HepG2 (cell line): ENCODE measurements at regions of chr9 and their contacts with region 1.

Region 1: GRCh38 chr9:93134015-93134739 is at the start of gene NINJ1:
- DNase-seq: peak; percentile 40
- ATAC-seq: peak; percentile 81
- H3K4me3 ChIP-seq: peak within 1 kb of the TSS; percentile 85 to 96 (median 92)
- H3K27ac ChIP-seq: peak within 1 kb of the TSS; percentile 99
- H3K4me1 ChIP-seq: peaks cover 77% of the 10 kb centered on the region
- H3K27me3 ChIP-seq: peaks cover 1 to 6% of the 10 kb centered on the region in 2 experiments; a peak in 1 of 5 replicates
- CTCF ChIP-seq: peak; percentile 5; the same call in 1 of the 2 replicates
- EP300 ChIP-seq: no peak
- POLR2A ChIP-seq: peak in 1 of 2 experiments; percentile 95; a peak in 2 of 4 replicates
- RAD21 ChIP-seq: peak; percentile 42; the same call in 1 of the 2 replicates
- total RNA-seq, gene NINJ1: 77.1 and 92.1 TPM in 2 replicates

Region 2: DNA sequence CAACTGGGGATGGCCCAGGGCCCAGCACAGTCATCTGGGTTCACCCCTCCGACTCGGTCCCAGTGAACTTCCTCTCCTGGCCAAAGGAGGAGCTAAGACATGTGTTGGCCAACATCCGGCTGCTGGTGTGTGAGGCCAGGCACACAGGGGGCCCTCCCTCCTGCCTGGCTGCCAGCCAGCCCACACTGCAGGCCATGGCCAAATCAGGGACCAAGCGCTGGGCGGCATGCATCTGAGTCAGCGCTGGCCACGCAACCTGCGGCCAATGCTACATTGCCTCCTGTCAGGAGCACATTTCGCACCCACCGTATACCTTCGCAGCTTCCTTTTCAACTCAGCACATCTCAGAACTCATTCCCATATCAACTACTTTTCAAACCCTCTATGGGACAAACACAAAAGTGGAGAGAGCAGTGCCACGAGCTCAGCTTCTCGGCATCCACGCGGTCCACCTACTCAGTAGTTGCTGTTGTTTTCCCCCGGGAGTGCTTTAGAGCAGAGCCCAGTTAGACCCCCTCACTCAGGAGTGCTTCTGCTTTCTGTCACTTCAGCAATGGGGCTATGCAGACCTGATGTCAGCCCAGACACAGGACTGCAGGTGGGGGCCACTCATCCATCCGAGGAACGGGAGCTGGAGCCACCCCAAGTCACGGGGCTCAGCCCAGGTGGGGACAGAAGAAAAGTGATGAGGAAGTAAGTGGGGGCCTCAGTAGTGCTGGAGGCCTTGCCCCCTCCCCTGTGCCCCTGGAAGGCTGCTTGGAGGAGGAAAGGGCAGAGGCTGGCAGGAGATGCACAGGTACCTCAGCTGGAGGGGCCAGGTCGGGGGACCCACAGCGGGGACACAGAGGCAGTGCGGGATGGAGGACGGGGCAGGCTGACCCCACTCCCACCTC is 14.0 kb before region 1 on chr9:
- CTCF ChIA-PET with region 1: no interaction called
- POLR2A ChIA-PET with region 1: interaction called, 195 read pairs
- in situ Hi-C with region 1: no loop called
- intact Hi-C with region 1: no loop called
- DNase-seq: peak; percentile 94
- ATAC-seq: peak; percentile 88
- H3K4me3 ChIP-seq: peak overlapping the region in 1 of 3 experiments; percentile 53; a peak in 1 of 6 replicates
- H3K27ac ChIP-seq: peak overlapping the region; percentile 63
- H3K4me1 ChIP-seq: peaks cover 37% of the 10 kb centered on the region
- H3K27me3 ChIP-seq: no peaks in the 10 kb centered on the region
- CTCF ChIP-seq: peak; percentile 82
- EP300 ChIP-seq: peak in 1 of 2 experiments; percentile 76; a peak in 3 of 4 replicates
- POLR2A ChIP-seq: peak in 1 of 2 experiments; percentile 54; a peak in 1 of 4 replicates
- RAD21 ChIP-seq: peak; percentile 75; the same call in 1 of the 2 replicates

Region 3: GRCh38 chr9:93154315-93154903 is 20.2 kb after region 1 on chr9:
- CTCF ChIA-PET with region 1: no interaction called
- POLR2A ChIA-PET with region 1: interaction called, 15 read pairs
- in situ Hi-C with region 1: no loop called
- intact Hi-C with region 1: no loop called
- DNase-seq: peak; percentile 58
- ATAC-seq: peak; percentile 71
- H3K4me3 ChIP-seq: no peak overlapping the region; a peak in 1 of 6 replicates
- H3K27ac ChIP-seq: no peak overlapping the region
- H3K4me1 ChIP-seq: peaks cover 38% of the 10 kb centered on the region
- H3K27me3 ChIP-seq: peaks cover 0 to 2% of the 10 kb centered on the region in 2 experiments; a peak in 2 of 5 replicates
- CTCF ChIP-seq: peak; percentile 89
- EP300 ChIP-seq: no peak
- POLR2A ChIP-seq: no peak
- RAD21 ChIP-seq: peak; percentile 33; the same call in 1 of the 2 replicates